ENCODE measurements at regions of chr3 and their contacts with region 1.

Region 1: GRCh38 chr3:138347960-138348753 is at the start of gene MRAS:
- DNase-seq: peak; percentile 88
- ATAC-seq: peak; percentile 85
- total RNA-seq, gene MRAS: 396 TPM

Region 2: GRCh38 chr3:138314751-138315150 is 33.4 kb before region 1 on chr3:
- intact Hi-C with region 1: no loop called
- DNase-seq: no peak
- ATAC-seq: no peak

Region 3: DNA sequence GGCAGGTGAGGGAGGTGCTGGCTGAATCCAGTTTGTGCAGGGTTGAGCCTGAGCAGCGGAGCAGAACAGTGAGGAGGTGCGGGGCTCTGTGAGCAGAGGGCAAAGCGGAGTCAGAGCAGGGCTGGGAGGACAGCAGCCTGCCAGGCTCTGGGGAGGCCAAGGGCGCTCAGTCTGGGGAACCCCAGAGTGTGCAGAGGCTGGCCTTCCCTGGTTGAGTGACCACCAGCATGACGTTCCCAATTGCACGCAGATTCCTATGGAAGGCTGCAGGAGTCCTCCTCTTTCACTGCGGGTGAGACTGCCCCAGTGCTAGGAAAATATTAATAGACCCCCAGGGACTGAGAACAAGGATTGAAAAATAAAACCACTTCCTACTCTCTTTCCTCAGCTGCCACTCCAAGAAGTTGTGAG is 13.4 kb after region 1 on chr3:
- intact Hi-C with region 1: loop called (anchors 2 kb)
- DNase-seq: no peak
- ATAC-seq: no peak

Region 4: DNA sequence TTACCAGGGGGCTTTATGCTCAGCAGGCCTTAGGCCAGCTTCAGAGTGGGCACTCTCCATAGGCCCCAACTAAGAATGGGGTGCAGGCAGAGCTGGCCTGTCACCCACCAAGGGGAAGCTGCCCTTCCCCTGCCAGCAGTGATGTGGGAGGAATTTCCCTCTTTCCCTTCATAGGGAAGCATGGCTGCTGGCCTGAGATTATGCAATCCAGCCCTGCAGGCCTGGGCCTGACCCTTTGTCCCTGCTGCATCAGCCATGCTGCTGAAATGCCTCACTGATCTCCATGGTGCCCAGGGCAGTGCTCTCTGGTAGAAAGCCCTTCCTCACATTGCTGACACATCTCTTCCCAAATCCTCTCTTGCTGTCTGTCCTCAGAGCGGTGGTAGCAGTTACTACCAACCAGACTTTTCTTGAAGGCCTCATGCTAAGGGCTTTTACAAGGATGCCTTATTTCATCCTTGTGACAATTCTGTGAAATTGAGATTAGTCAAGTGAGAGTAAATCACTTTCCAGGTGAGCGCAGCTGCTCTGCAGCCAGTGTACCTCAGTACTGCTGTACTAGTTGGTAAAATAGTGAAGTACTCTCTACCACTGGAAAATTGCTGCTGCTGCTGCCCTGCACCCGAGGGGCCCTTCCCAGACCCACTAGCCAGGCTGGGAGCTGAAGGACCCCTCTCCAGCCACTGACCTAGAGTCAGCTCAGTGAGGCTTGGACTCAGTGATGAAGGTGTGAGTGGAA is 34.0 kb after region 1 on chr3:
- intact Hi-C with region 1: loop called (anchors 5 kb)
- DNase-seq: peak; percentile 86
- ATAC-seq: peak; percentile 88

Measured in Right ventricle myocardium inferior (tissue), 1 donor.